ENCODE measurements at regions of chr3 and their contacts with region 1.

Region 1: DNA sequence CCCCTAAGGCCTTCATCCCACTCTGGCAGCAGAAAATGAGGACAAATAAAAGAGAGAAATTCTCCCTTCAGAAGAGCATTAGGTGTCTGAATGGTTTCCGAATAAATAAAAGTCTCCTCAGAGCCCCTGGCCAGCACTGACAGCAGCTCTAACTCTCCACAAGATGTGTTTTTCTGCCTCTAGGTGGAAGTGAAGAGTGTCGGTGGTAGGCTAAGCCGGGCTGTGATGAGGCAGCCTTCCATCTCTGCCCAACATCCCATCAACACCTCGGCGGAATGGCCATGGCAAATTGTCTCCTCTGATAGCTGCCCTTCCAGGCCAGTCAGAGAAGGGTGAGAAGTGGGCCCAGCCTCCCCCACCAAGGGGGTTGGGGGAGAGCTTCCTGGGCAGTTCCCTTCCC is 6.3 kb upstream of the CACNA2D2 start:
- DNase-seq: no peak
- H3K4me3 ChIP-seq: no peak overlapping the region
- H3K27ac ChIP-seq: no peak overlapping the region
- H3K4me1 ChIP-seq: no peaks in the 10 kb centered on the region
- H3K27me3 ChIP-seq: peaks cover 0 to 2% of the 10 kb centered on the region in 2 donors
- CTCF ChIP-seq: no peak

Region 2: DNA sequence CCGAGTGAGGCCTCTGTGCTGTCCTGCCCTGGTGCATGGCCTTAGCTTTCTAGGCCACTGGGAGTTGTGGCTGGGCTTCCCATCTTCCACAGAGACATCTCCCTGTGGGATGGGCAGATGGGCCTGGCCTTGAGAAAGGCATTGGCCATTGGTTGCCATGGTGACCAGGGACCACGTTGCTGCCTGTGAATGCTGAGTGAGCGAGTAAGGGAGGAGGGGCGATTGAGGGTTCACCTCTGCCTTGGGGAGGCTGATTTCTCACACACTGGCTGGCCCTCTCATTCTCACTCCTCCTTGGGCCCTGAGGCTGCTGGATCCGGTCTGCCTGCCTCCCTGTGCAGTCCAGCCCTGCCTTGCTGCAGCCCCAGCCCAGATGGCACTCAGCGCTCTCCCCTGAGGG is 138.6 kb after region 1 on chr3:
- intact Hi-C with region 1: loop called (anchors 5 kb)
- DNase-seq: no peak
- H3K4me3 ChIP-seq: no peak overlapping the region
- H3K27ac ChIP-seq: no peak overlapping the region
- H3K4me1 ChIP-seq: peaks cover 0 to 37% (median 21%) of the 10 kb centered on the region in 4 donors
- H3K27me3 ChIP-seq: no peaks in the 10 kb centered on the region
- CTCF ChIP-seq: no peak

Region 3: DNA sequence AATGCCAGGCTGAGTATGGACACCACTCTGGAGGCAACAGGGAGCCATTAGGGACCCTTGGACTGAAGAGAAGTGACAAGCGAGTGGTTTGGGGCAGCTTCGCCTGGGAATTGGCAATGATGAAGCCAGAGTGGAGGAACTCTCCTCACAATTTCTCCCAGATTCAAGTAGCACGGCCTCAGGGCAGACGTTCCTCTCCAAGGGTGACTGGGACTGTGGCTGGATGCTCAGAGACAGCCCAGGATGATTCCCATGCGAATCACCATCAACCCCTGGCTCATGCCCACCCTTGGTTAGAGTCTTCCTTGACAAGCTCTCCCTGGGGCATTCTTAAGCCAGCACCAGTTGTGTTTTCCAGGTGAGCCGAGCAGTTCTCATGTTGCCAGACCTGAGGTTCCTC is 148.7 kb after region 1 on chr3:
- intact Hi-C with region 1: no loop called
- DNase-seq: peak in 1 of 2 donors; percentile 32
- H3K4me3 ChIP-seq: no peak overlapping the region
- H3K27ac ChIP-seq: no peak overlapping the region
- H3K4me1 ChIP-seq: peaks cover 0 to 6% (median 0%) of the 10 kb centered on the region in 4 donors
- H3K27me3 ChIP-seq: no peaks in the 10 kb centered on the region
- CTCF ChIP-seq: no peak

Region 4: DNA sequence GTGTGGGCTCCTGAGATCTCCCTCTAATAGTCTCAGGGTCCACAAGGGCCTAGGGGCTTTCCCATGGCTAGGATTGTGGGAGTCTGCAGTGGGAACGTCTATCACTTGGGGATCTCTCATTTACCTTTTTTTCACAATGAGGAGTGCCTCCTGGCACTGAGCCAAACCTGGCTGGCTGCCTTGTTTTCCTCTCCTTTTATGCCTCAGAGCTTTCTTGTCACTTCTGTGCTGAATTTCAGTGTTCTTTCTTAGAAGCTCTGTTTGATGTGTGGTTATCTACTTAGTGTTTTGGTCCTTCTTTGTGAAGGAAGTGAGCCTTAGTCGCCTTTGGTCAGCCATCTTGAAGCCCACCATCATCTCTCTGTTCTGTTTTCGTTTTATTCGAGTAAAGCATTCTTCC is 198.9 kb after region 1 on chr3:
- intact Hi-C with region 1: no loop called
- DNase-seq: no peak
- H3K4me3 ChIP-seq: no peak overlapping the region
- H3K27ac ChIP-seq: no peak overlapping the region
- H3K4me1 ChIP-seq: peaks cover 0 to 6% (median 0%) of the 10 kb centered on the region in 4 donors
- H3K27me3 ChIP-seq: no peaks in the 10 kb centered on the region
- CTCF ChIP-seq: no peak

Measured in tibial artery (tissue), 4 donors.